Mammary epithelial cell (primary cell): ENCODE measurements at regions of chr11 and their contacts with region 1.

Region 1: GRCh38 chr11:4065601-4066377 is 28.8 kb upstream of the RRM1 start:
- DNase-seq: no peak
- H3K4me3 ChIP-seq: no peak overlapping the region
- H3K27ac ChIP-seq: no peak overlapping the region
- H3K4me1 ChIP-seq: no peaks in the 10 kb centered on the region
- H3K27me3 ChIP-seq: no peaks in the 10 kb centered on the region
- CTCF ChIP-seq: no peak

Region 2: GRCh38 chr11:3849297-3849874 is 216.4 kb before region 1 on chr11:
- CTCF ChIA-PET with region 1: no interaction called
- dilution Hi-C with region 1: loop called (anchors 5 kb)
- in situ Hi-C with region 1: loop called (anchors 5 kb)
- intact Hi-C with region 1: no loop called
- DNase-seq: peak; percentile 32
- H3K4me3 ChIP-seq: no peak overlapping the region
- H3K27ac ChIP-seq: no peak overlapping the region
- H3K4me1 ChIP-seq: peaks cover 4% of the 10 kb centered on the region
- H3K27me3 ChIP-seq: no peaks in the 10 kb centered on the region
- CTCF ChIP-seq: peak; percentile 59 to 74

Region 3: DNA sequence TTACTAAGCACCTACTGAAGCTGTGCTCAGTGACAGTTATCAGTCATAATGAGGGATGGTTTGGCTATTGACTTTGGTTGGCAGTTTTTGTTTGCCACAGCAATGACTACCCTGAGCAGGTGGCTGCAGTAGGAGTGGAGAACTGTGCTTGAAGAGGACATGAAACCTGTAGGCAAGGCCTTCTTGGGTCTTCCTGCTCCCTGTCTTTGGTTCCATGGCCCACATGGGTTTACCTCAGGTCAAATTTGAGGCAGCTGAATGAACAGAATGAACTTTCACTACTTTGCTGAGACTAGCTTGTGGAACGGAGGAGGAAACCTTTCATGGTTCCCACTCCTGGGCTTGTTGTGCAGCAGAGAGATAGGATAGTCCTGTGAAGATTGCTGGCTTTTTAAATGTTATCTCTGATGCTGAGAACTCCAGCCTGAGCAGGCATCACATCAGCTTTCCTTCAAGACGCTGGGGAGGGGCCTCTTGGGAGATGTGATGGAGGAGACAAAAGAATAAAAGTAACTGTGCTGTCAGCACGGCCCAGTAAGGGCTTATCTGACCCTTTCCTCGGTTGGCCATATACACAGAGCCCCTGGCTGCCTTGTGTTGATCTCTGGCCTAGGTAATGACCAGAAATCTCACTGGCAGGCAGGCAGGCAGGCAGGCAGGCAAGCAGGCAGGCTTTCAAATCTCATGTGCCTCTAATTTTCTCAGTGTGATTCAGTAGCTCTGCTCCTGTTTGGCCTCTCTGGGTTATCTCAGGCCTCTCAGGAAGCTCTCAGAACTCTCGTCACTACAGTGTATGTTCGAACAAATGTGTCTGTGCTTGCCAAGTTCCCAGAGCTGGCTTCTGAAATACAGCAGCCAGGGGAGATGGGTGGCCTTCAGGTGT is 198.3 kb before region 1 on chr11:
- CTCF ChIA-PET with region 1: no interaction called
- dilution Hi-C with region 1: no loop called
- in situ Hi-C with region 1: no loop called
- intact Hi-C with region 1: no loop called
- DNase-seq: peak; percentile 45
- H3K4me3 ChIP-seq: no peak overlapping the region
- H3K27ac ChIP-seq: no peak overlapping the region
- H3K4me1 ChIP-seq: peaks cover 25% of the 10 kb centered on the region
- H3K27me3 ChIP-seq: no peaks in the 10 kb centered on the region
- CTCF ChIP-seq: no peak

Region 4: GRCh38 chr11:3914805-3915204 is 151.0 kb before region 1 on chr11:
- CTCF ChIA-PET with region 1: no interaction called
- dilution Hi-C with region 1: no loop called
- in situ Hi-C with region 1: no loop called
- intact Hi-C with region 1: no loop called
- DNase-seq: peak; percentile 21
- H3K4me3 ChIP-seq: no peak overlapping the region
- H3K27ac ChIP-seq: no peak overlapping the region
- H3K4me1 ChIP-seq: peaks cover 13% of the 10 kb centered on the region
- H3K27me3 ChIP-seq: no peaks in the 10 kb centered on the region
- CTCF ChIP-seq: no peak

Region 5: DNA sequence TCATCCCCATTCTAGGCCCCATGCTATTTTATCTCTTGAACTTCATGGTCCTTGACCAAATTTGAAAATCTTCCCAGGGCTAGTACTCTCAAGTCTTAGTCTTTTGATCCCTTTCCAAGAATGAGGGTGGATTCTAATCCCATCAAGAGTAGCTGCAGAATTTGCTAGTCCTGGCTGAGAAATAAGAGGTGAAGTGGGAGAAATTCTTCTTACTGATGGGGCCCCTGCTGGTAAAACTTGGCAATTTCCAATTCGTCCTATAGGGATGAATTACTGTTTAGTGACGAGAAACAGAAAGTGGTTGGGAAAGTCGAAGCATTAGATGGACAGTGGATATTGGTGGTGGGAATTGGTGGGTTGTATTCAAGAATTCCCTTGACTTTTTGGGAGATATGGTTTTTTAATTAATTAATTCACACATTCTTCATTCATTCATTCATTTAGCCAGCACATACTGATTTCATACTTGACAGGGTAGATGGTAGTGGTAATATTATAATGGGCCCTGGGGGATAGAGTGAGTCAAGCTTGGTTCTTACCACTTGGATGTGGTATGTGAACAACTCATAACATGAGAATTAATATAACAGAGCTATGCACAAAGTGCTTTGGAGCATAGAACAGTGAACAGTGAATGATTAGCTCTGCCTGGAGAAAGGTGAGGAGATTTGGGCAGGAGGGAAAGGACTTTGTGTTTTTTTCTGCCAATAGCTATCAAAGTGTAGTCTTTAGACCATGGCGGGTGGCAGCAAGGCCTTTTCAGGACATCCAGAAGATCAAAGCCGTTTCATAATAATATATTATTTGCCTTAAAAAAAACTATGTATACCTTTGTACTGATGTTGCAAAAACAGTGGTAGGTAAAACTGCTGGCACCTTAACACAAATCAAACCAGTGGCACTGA is 106.5 kb before region 1 on chr11:
- CTCF ChIA-PET with region 1: interaction called, 4 read pairs
- dilution Hi-C with region 1: loop called (anchors 10 kb)
- in situ Hi-C with region 1: no loop called
- intact Hi-C with region 1: no loop called
- DNase-seq: peak; percentile 79
- H3K4me3 ChIP-seq: no peak overlapping the region
- H3K27ac ChIP-seq: peak overlapping the region; percentile 54
- H3K4me1 ChIP-seq: peaks cover 42% of the 10 kb centered on the region
- H3K27me3 ChIP-seq: no peaks in the 10 kb centered on the region
- CTCF ChIP-seq: peak; percentile 19 to 24

Region 6: GRCh38 chr11:4146070-4146771 is 80.4 kb after region 1 on chr11:
- CTCF ChIA-PET with region 1: no interaction called
- dilution Hi-C with region 1: no loop called
- in situ Hi-C with region 1: no loop called
- intact Hi-C with region 1: no loop called
- DNase-seq: no peak
- H3K4me3 ChIP-seq: no peak overlapping the region
- H3K27ac ChIP-seq: no peak overlapping the region
- H3K4me1 ChIP-seq: no peaks in the 10 kb centered on the region
- H3K27me3 ChIP-seq: no peaks in the 10 kb centered on the region
- CTCF ChIP-seq: no peak